WTC11 (cell line): ENCODE measurements at regions of chr19 and their contacts with region 1.

Region 1: DNA sequence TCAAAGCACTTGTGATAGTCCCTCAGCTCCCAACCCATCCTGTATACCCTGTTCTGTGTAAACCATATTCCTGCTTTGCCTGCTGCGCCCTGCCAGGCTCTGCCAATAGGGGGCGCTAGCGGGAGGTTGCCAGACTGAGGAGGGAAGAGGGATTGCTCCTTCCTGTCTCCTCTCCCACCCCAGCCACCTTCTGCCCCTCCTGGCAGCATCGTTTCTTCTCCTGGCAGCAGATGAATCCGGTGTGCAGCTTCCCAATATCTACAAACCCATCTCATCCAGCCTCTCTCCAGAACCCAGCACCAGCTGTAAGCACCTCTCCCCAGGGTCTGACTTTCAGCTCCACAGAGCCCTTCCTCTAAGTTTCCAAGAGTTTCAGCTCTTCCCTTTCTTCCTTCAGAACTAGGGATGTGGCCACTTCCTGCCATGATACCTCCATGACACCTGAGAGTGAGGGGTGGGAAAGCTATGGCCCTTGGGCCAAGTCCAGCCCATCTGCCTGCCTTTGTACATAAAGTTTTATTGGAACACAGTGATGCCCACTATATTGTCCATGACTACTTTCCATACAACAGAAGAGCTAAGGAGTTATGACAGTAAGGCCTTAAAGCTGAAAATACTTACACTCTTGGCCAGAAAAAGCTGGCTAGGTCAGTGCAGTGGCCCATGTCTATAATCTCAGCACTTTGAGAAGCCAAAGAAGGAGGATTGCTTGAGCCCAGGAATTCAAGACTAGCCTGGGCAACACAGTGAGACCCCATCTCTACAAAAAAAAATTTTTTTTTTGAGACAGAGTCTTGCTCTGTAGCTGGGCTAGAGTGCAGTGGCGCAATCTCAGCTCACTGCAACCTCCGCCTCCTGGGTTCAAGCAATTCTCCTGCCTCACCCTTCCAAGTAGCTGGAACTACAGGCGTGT is 34.5 kb upstream of the ATP1A3 start:
- DNase-seq: peak; percentile 93
- ATAC-seq: peak; percentile 79
- H3K4me3 Mint-ChIP-seq: peak overlapping the region; percentile 62
- H3K27ac Mint-ChIP-seq: peak overlapping the region; percentile 17
- H3K4me1 Mint-ChIP-seq: peaks cover 39% of the 10 kb centered on the region
- H3K27me3 Mint-ChIP-seq: no peaks in the 10 kb centered on the region
- CTCF ChIP-seq: peak; percentile 98

Region 2: DNA sequence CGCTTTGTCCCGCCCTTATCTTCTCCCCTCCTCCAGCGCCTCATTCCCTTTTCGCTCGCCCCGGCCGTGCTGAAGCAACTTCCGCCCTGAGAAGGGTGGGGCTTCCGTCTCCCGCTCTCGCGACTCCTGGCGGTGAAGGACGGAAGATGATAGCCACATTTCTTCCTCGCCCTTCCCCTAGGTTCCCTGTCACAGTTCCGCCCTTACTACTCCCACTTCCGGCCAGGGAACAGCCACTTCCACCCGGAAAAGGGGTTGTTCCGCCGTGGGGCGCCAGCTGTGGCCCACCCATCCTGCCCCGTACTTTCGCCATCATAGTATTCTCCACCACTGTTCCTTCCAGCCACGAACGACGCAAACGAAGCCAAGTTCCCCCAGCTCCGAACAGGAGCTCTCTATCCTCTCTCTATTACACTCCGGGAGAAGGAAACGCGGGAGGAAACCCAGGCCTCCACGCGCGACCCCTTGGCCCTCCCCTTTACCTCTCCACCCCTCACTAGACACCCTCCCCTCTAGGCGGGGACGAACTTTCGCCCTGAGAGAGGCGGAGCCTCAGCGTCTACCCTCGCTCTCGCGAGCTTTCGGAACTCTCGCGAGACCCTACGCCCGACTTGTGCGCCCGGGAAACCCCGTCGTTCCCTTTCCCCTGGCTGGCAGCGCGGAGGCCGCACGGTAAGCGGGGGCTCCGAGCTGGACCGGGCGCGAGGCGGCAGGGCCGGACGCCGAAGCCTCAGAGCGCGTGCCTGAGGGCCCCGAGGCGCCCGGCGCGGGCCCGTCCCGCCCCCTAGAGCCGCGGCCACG is 168.7 kb before region 1 on chr19 and contains the start of gene RPS19:
- CTCF ChIA-PET with region 1: no interaction called
- POLR2A ChIA-PET with region 1: no interaction called
- DNase-seq: peak; percentile 98
- ATAC-seq: peak; percentile 89
- H3K4me3 Mint-ChIP-seq: peak within 1 kb of the TSS; percentile 94
- H3K27ac Mint-ChIP-seq: peak within 1 kb of the TSS; percentile 99
- H3K4me1 Mint-ChIP-seq: peaks cover 43% of the 10 kb centered on the region
- H3K27me3 Mint-ChIP-seq: peaks cover 13% of the 10 kb centered on the region
- CTCF ChIP-seq: 0 out of 2 replicates have a peak, but pooled peaks have one; percentile 23
- total RNA-seq, gene RPS19: 3,152 to 3,787 TPM (median 3,713 TPM) in 3 replicates

Region 3: DNA sequence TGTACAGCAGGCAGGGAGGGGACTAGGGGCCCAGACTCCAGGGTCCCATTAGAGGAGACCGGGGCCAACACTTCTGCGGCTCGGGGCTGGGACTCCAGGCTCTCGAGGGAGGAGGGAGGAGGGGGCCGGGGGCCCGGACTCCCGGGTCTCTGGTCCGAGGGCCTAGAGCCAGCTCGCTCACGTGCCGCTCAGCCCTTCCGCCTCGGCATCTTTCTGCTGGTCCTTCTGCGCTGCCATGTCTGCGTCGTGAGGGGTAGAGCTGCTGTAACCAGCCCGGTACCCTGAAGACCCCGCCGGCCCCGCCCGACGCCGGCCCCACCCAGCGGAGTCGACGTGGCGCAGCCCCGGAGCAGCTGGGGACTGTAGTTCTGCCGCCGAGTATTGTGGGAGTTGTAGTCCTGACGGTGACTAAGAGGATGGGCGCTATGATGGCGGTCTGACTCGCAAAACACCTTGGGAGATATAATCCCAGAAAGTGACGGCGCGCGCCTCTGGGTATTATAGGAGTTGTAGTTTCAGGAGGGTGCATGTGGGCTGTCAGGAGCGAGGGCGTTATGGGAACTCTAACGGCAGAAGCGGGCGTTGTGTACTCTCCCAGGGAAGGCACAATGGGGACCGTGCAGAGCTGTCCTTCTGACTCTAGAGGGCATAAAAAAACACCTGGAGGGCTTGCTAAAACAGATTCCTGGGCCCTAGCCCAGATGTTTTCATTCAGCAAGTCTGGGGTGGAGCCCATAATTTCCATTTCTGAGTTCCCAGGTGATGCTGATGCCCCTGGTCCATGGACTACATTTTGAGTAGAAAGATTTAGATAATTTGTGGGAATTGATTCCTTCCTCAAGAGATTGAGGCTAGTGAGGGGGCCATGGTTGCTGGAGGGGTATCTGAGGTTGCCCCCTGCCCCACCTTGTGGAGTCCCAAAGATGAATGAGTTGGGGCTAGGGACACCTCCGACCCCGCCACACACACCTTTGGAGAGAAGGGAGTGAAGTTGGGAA is 69.2 kb before region 1 on chr19 and contains the start of gene RABAC1:
- CTCF ChIA-PET with region 1: interaction called, 19 read pairs
- POLR2A ChIA-PET with region 1: interaction called, 4 read pairs
- DNase-seq: peak; percentile 97
- ATAC-seq: peak; percentile 85
- H3K4me3 Mint-ChIP-seq: peak within 1 kb of the TSS; percentile 78
- H3K27ac Mint-ChIP-seq: peak within 1 kb of the TSS; percentile 98
- H3K4me1 Mint-ChIP-seq: peaks cover 18% of the 10 kb centered on the region
- H3K27me3 Mint-ChIP-seq: no peaks in the 10 kb centered on the region
- CTCF ChIP-seq: no peak
- total RNA-seq, gene RABAC1: 159 to 184 TPM (median 159 TPM) in 3 replicates

Region 4: DNA sequence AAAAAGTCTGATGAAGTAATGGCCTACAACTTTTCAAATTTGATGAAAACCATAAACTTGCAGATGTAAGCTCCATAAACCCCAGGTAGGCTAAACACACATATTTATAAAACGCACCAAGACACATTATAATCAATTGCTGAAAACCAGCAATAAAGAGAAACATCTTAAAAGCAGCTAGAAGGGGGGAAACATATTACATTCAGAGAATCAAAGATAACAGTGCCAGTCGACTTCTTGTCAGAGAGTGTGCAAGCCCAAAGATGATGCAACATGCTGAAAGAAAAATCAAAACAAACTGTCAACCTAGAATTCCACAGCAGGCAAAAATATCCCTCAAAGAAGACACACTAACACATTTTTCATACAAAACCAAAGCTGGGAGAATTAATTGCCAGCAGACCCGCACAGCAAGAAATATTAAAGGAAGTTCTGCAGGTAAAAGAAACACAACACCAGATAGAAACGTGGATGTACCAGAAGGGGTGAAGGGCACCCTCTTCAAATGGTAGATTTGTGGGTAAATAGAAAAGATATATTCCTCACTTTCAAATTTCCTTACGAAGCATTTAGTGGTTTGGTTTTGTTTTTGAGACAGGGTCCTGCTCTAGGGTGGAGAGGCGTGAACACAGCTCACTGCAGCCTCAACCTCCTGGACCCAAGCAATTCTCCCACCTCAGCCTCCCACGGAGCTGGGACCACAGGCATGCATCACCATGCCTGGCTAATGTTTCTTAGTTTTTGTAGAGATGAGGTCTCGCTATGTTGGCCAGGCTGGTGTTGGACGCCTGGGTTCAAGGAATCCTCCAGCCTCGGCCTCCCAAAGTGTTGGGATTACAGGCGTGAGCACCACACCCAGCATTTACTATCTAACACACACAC is 18.1 kb before region 1 on chr19:
- CTCF ChIA-PET with region 1: interaction called, 17 read pairs
- POLR2A ChIA-PET with region 1: no interaction called
- DNase-seq: no peak
- ATAC-seq: no peak
- H3K4me3 Mint-ChIP-seq: no peak overlapping the region
- H3K27ac Mint-ChIP-seq: no peak overlapping the region
- H3K4me1 Mint-ChIP-seq: no peaks in the 10 kb centered on the region
- H3K27me3 Mint-ChIP-seq: no peaks in the 10 kb centered on the region
- CTCF ChIP-seq: no peak

Region 5: GRCh38 chr19:42038666-42039065 is 10.1 kb after region 1 on chr19:
- CTCF ChIA-PET with region 1: interaction called, 22 read pairs
- POLR2A ChIA-PET with region 1: no interaction called
- DNase-seq: no peak
- ATAC-seq: no peak
- H3K4me3 Mint-ChIP-seq: no peak overlapping the region
- H3K27ac Mint-ChIP-seq: no peak overlapping the region
- H3K4me1 Mint-ChIP-seq: peaks cover 9% of the 10 kb centered on the region
- H3K27me3 Mint-ChIP-seq: no peaks in the 10 kb centered on the region
- CTCF ChIP-seq: no peak

Region 6: GRCh38 chr19:42066075-42066754 is 37.7 kb after region 1 on chr19:
- CTCF ChIA-PET with region 1: interaction called, 15 read pairs
- POLR2A ChIA-PET with region 1: no interaction called
- DNase-seq: peak; percentile 63
- ATAC-seq: peak; percentile 12
- H3K4me3 Mint-ChIP-seq: no peak overlapping the region
- H3K27ac Mint-ChIP-seq: no peak overlapping the region
- H3K4me1 Mint-ChIP-seq: peaks cover 9% of the 10 kb centered on the region
- H3K27me3 Mint-ChIP-seq: no peaks in the 10 kb centered on the region
- CTCF ChIP-seq: no peak